PC-3 (cell line): ENCODE measurements at regions of chr5 and their contacts with region 1.

Region 1: GRCh38 chr5:41641621-41642020 is 131.2 kb upstream of the PLCXD3 start:
- DNase-seq: peak; percentile 52
- ATAC-seq: no peak
- H3K4me3 ChIP-seq: no peak overlapping the region
- H3K27ac ChIP-seq: no peak overlapping the region
- H3K4me1 ChIP-seq: no peaks in the 10 kb centered on the region
- H3K27me3 ChIP-seq: no peaks in the 10 kb centered on the region
- CTCF ChIP-seq: peak; percentile 82

Region 2: DNA sequence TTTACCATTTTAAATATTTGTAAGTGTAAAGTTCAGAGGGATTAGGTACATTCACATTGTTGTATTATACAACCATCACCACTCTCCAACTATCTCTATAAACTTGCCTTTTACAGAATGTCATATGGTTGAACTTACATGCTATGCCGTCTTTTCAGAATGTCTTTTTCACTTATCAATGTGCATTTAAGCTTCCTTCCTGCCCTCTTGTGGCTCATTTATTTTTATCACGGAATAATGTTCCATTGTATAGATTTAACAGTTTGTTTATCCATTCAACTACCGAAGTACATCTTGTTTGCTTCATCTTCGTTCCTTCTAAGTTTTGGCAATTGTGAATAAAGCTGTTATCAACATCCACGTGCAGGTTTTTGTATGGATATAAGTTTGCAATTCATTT is 295.0 kb before region 1 on chr5:
- CTCF ChIA-PET with region 1: interaction called, 7 read pairs
- POLR2A ChIA-PET with region 1: no interaction called
- intact Hi-C with region 1: loop called (anchors 5 kb)
- DNase-seq: peak; percentile 66
- ATAC-seq: no peak; the same call in 1 of the 2 replicates
- H3K4me3 ChIP-seq: no peak overlapping the region
- H3K27ac ChIP-seq: no peak overlapping the region
- H3K4me1 ChIP-seq: peaks cover 6% of the 10 kb centered on the region; the same call in 1 of the 2 replicates
- H3K27me3 ChIP-seq: no peaks in the 10 kb centered on the region
- CTCF ChIP-seq: peak; percentile 67

Region 3: GRCh38 chr5:41371741-41372140 is 269.9 kb before region 1 on chr5:
- CTCF ChIA-PET with region 1: no interaction called
- POLR2A ChIA-PET with region 1: no interaction called
- intact Hi-C with region 1: no loop called
- DNase-seq: peak; percentile 74
- ATAC-seq: peak; percentile 65
- H3K4me3 ChIP-seq: no peak overlapping the region
- H3K27ac ChIP-seq: no peak overlapping the region
- H3K4me1 ChIP-seq: peaks cover 15% of the 10 kb centered on the region
- H3K27me3 ChIP-seq: no peaks in the 10 kb centered on the region
- CTCF ChIP-seq: no peak

Region 4: DNA sequence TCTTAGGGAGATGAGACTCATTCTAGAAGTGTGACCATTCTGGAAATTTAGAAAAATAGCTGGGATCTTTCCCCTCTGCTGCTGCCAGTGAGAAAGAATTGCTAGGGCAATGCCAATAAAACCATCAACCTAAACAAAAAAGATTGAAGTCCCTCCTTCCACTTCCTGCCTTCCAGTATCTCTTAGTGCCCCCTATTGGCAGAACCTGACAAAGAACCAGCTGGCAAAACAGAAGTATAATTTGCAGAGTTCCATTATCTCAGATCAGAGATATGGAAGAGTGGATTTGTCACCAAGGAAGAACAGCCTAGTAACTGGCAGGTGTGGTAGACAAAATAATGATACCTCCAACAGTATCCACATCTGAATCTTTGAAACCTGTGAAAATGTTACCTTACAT is 117.4 kb before region 1 on chr5:
- CTCF ChIA-PET with region 1: no interaction called
- POLR2A ChIA-PET with region 1: no interaction called
- intact Hi-C with region 1: loop called (anchors 5 kb)
- DNase-seq: peak; percentile 43
- ATAC-seq: no peak
- H3K4me3 ChIP-seq: no peak overlapping the region
- H3K27ac ChIP-seq: no peak overlapping the region
- H3K4me1 ChIP-seq: peaks cover 21% of the 10 kb centered on the region
- H3K27me3 ChIP-seq: no peaks in the 10 kb centered on the region
- CTCF ChIP-seq: peak; percentile 58